Transverse colon (tissue), 4 donors: ENCODE measurements at regions of chr10 and their contacts with region 1.

Region 1: GRCh38 chr10:125209591-125210355 is 49.4 kb upstream of the CTBP2 start:
- DNase-seq: no peak
- H3K4me3 ChIP-seq: no peak overlapping the region
- H3K27ac ChIP-seq: no peak overlapping the region
- H3K4me1 ChIP-seq: no peaks in the 10 kb centered on the region
- H3K27me3 ChIP-seq: no peaks in the 10 kb centered on the region
- CTCF ChIP-seq: no peak
- EP300 ChIP-seq: no peak
- POLR2A ChIP-seq: no peak

Region 2: GRCh38 chr10:124827474-124827873 is 382.3 kb before region 1 on chr10:
- in situ Hi-C with region 1: no loop called
- intact Hi-C with region 1: no loop called
- DNase-seq: no peak
- H3K4me3 ChIP-seq: no peak overlapping the region
- H3K27ac ChIP-seq: no peak overlapping the region
- H3K4me1 ChIP-seq: no peaks in the 10 kb centered on the region
- H3K27me3 ChIP-seq: no peaks in the 10 kb centered on the region
- CTCF ChIP-seq: peak; percentile 50 to 67 (median 57)
- EP300 ChIP-seq: no peak
- POLR2A ChIP-seq: no peak

Region 3: GRCh38 chr10:125238682-125239081 is 28.9 kb after region 1 on chr10:
- in situ Hi-C with region 1: no loop called
- intact Hi-C with region 1: loop called (anchors 1 kb)
- DNase-seq: no peak
- H3K4me3 ChIP-seq: no peak overlapping the region
- H3K27ac ChIP-seq: no peak overlapping the region
- H3K4me1 ChIP-seq: no peaks in the 10 kb centered on the region
- H3K27me3 ChIP-seq: no peaks in the 10 kb centered on the region
- CTCF ChIP-seq: no peak
- EP300 ChIP-seq: no peak
- POLR2A ChIP-seq: no peak

Region 4: DNA sequence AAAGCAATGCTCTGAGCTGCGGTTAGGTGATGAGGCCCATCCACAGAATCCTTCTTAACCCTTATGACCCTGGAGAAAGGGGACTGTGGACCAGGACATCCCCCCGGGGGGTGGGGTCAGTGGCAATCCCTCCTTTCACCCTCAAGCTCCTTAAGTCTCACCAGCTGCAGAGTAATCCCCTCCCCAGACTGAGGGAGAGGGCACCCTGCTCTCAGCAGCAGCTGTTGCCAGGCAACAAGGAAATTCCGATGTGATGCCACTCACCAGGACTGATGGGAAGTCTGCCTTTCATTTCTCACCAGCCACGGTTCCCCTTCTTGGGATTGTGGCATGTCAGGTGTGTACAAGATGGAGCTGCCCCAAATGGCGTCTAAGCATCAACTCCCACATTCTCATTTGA is 1825.0 kb after region 1 on chr10:
- in situ Hi-C with region 1: no loop called
- intact Hi-C with region 1: loop called (anchors 5 kb)
- DNase-seq: no peak
- H3K4me3 ChIP-seq: no peak overlapping the region
- H3K27ac ChIP-seq: no peak overlapping the region
- H3K4me1 ChIP-seq: no peaks in the 10 kb centered on the region
- H3K27me3 ChIP-seq: no peaks in the 10 kb centered on the region
- CTCF ChIP-seq: no peak
- EP300 ChIP-seq: no peak
- POLR2A ChIP-seq: no peak